ENCODE measurements at regions of chr3 and their contacts with region 1.

Region 1: GRCh38 chr3:131896285-131896684 is 138.5 kb downstream of the CPNE4 start:
- DNase-seq: peak; percentile 69
- ATAC-seq: peak; percentile 75
- H3K4me3 ChIP-seq: no peak overlapping the region
- H3K27ac ChIP-seq: no peak overlapping the region
- H3K4me1 ChIP-seq: peaks cover 11% of the 10 kb centered on the region
- H3K27me3 ChIP-seq: no peaks in the 10 kb centered on the region
- CTCF ChIP-seq: no peak

Region 2: GRCh38 chr3:131883086-131883485 is 13.2 kb before region 1 on chr3:
- CTCF ChIA-PET with region 1: no interaction called
- POLR2A ChIA-PET with region 1: no interaction called
- intact Hi-C with region 1: loop called (anchors 2 kb)
- DNase-seq: peak; percentile 44
- ATAC-seq: peak; percentile 7; the same call in 1 of the 2 replicates
- H3K4me3 ChIP-seq: peak overlapping the region; percentile 16; the same call in 1 of the 2 replicates
- H3K27ac ChIP-seq: peak overlapping the region; percentile 70
- H3K4me1 ChIP-seq: peaks cover 20% of the 10 kb centered on the region
- H3K27me3 ChIP-seq: no peaks in the 10 kb centered on the region
- CTCF ChIP-seq: no peak

Measured in PC-3 (cell line).